ENCODE measurements at regions of chr9 and their contacts with region 1.

Region 1: GRCh38 chr9:76393963-76394679 is at the start of gene RFK:
- DNase-seq: peak; percentile 94
- H3K4me3 Mint-ChIP-seq: peak within 1 kb of the TSS; percentile 86
- H3K27ac Mint-ChIP-seq: peak within 1 kb of the TSS; percentile 96
- H3K4me1 Mint-ChIP-seq: peaks cover 37% of the 10 kb centered on the region
- H3K27me3 Mint-ChIP-seq: no peaks in the 10 kb centered on the region
- total RNA-seq, gene RFK: 18.4 to 18.7 TPM

Region 2: GRCh38 chr9:76379512-76379911 is 14.6 kb before region 1 on chr9:
- CTCF ChIA-PET with region 1: interaction called, 13 read pairs
- POLR2A ChIA-PET with region 1: interaction called, 11 read pairs
- DNase-seq: no peak
- H3K4me3 Mint-ChIP-seq: no peak overlapping the region
- H3K27ac Mint-ChIP-seq: no peak overlapping the region
- H3K4me1 Mint-ChIP-seq: no peaks in the 10 kb centered on the region
- H3K27me3 Mint-ChIP-seq: no peaks in the 10 kb centered on the region

Region 3: GRCh38 chr9:76441551-76442322 is 47.6 kb after region 1 on chr9:
- CTCF ChIA-PET with region 1: interaction called, 11 read pairs
- POLR2A ChIA-PET with region 1: interaction called, 16 read pairs
- DNase-seq: peak; percentile 49
- H3K4me3 Mint-ChIP-seq: peak overlapping the region; percentile 57
- H3K27ac Mint-ChIP-seq: peak overlapping the region; percentile 80
- H3K4me1 Mint-ChIP-seq: peaks cover 65% of the 10 kb centered on the region
- H3K27me3 Mint-ChIP-seq: no peaks in the 10 kb centered on the region

Region 4: GRCh38 chr9:76448501-76448900 is 54.4 kb after region 1 on chr9:
- CTCF ChIA-PET with region 1: interaction called, 11 read pairs
- POLR2A ChIA-PET with region 1: interaction called, 6 read pairs
- DNase-seq: no peak
- H3K4me3 Mint-ChIP-seq: no peak overlapping the region
- H3K27ac Mint-ChIP-seq: no peak overlapping the region
- H3K4me1 Mint-ChIP-seq: peaks cover 33% of the 10 kb centered on the region
- H3K27me3 Mint-ChIP-seq: no peaks in the 10 kb centered on the region

Region 5: GRCh38 chr9:76458903-76459690 is 65.0 kb after region 1 on chr9 and contains the start of gene GCNT1:
- CTCF ChIA-PET with region 1: interaction called, 16 read pairs
- POLR2A ChIA-PET with region 1: interaction called, 14 read pairs
- DNase-seq: peak; percentile 93
- H3K4me3 Mint-ChIP-seq: peak within 1 kb of the TSS; percentile 86
- H3K27ac Mint-ChIP-seq: peak within 1 kb of the TSS; percentile 76
- H3K4me1 Mint-ChIP-seq: peaks cover 39% of the 10 kb centered on the region
- H3K27me3 Mint-ChIP-seq: no peaks in the 10 kb centered on the region
- total RNA-seq, gene GCNT1: 13.3 to 14.4 TPM

Region 6: DNA sequence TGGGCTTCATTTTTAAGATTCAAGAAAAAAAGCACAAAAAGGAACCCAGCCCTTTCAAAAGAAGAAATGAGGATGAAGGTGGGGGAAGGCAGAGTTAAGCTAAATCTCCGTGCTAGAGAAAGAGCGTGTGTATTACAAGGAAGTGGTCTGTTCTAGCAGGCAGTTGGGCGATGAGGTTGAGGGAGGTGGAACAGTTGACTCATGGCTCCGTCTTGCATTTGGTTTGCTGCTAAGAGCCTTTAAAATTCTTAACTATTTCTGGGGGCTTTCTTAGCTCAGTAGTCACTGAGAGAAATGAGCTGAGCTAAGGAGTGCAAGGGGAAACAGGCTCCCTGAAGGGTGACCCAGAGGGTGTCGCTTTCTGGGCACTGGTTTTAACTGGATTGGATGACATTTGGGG is 182.2 kb after region 1 on chr9:
- CTCF ChIA-PET with region 1: interaction called, 3 read pairs
- POLR2A ChIA-PET with region 1: interaction called, 14 read pairs
- DNase-seq: peak; percentile 85
- H3K4me3 Mint-ChIP-seq: peak overlapping the region; percentile 11
- H3K27ac Mint-ChIP-seq: peak overlapping the region; percentile 90
- H3K4me1 Mint-ChIP-seq: peaks cover 46% of the 10 kb centered on the region
- H3K27me3 Mint-ChIP-seq: peaks cover 2% of the 10 kb centered on the region

Region 7: DNA sequence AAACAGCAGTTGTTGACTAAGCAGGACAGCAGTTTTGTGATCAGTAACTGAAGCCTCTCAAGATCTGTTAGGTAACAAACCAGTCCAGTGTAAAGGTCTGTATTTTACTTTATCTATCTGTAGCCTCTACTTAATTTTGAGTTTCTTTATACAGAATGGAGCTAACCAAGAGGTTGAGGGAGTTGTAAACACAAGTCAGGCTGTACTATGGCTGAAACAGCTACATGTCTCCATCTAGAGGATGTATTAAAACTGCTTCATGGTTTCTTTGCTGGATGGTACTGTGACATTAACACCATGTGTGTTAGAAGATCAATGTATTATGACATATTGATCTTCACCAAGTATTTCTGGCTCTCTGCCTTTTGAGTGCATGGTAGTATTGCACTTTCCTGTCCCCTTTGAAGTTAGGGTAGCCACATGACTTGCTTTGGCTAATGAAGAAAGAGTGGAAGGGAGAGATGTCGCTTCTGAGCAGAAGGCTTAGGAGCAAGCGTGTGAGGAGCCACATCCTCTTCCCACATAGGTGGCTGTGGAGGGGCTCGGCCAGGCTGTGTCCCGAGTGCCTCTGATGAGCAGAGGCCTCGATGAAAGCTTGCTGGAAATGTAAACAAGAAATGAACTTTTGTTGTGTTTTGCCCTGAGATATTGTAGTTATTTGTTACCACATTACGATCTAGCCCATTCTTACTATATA is 264.6 kb after region 1 on chr9:
- CTCF ChIA-PET with region 1: interaction called, 11 read pairs
- POLR2A ChIA-PET with region 1: interaction called, 4 read pairs
- DNase-seq: no peak
- H3K4me3 Mint-ChIP-seq: no peak overlapping the region
- H3K27ac Mint-ChIP-seq: no peak overlapping the region
- H3K4me1 Mint-ChIP-seq: peaks cover 50% of the 10 kb centered on the region
- H3K27me3 Mint-ChIP-seq: no peaks in the 10 kb centered on the region

Measured in activated CD4-positive, alpha-beta memory T cell treated with anti-CD3 and anti-CD28 coated beads, Interleukin-2, amount 10 ng/mL, durations not matched to agents 7 days and 5 days (primary cell).